ENCODE measurements at regions of chr11 and their contacts with region 1.

Region 1: GRCh38 chr11:117946842-117947526 is 17.8 kb upstream of the TMPRSS13 start:
- DNase-seq: peak; percentile 81 to 99
- H3K4me3 ChIP-seq: no peak overlapping the region
- H3K27ac ChIP-seq: no peak overlapping the region
- H3K4me1 ChIP-seq: 0 out of 7 replicates have a peak, but pooled peaks cover 0 to 2% (median 0%) of the 10 kb centered on the region in 4 experiments
- H3K27me3 ChIP-seq: no peaks in the 10 kb centered on the region
- CTCF ChIP-seq: peak; percentile 87 to 98 (median 98)
- EP300 ChIP-seq: 0 out of 3 replicates have a peak, but pooled peaks of 1 of the 2 experiments have one; percentile 9
- POLR2A ChIP-seq: no peak
- RAD21 ChIP-seq: peak; percentile 98 to 99

Region 2: GRCh38 chr11:117572129-117572528 is 374.9 kb before region 1 on chr11:
- CTCF ChIA-PET with region 1: no interaction called
- POLR2A ChIA-PET with region 1: no interaction called
- DNase-seq: no peak
- H3K4me3 ChIP-seq: no peak overlapping the region
- H3K27ac ChIP-seq: no peak overlapping the region
- H3K4me1 ChIP-seq: no peaks in the 10 kb centered on the region
- H3K27me3 ChIP-seq: no peaks in the 10 kb centered on the region
- CTCF ChIP-seq: no peak
- EP300 ChIP-seq: no peak
- POLR2A ChIP-seq: no peak
- RAD21 ChIP-seq: no peak

Region 3: DNA sequence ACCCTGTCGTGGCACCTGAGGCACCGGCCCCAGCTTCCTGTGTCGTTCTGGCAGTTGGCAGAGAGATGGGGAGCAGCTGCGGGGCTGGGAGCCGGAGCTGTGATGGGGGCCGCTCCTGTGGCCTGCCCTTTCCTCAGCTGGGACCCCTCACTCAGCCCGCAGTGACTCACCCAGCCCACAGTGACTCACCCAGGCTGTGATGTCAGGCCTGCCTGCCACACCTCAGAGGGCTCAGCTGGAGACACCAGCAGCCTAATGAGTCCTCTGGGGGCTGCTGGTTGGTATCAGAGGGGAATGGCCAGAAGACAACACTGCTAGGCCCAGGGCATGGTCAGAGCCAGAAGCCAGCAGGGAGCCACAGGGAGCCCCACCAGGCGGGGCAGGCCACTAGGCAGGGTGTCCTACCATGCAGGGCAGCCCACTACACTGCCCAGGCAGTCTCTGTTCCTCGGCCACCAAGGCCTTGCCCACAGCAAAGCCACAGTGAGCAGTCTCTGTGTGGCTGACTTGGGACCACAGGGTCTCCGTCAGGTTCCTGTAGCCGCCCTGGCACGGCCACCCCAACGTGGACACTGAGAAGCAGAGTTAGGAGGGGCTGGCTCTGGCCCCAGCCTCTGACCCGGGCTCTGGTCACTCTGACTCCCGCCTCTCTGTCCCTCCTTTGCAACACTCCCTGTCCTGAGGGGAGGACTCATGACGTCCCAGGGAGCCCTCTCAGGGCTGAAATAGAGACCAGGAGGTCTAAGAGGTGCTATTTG is 118.2 kb before region 1 on chr11:
- CTCF ChIA-PET with region 1: interaction called, 91 read pairs
- POLR2A ChIA-PET with region 1: no interaction called
- DNase-seq: peak in 1 of 2 experiments; percentile 43
- H3K4me3 ChIP-seq: no peak overlapping the region
- H3K27ac ChIP-seq: no peak overlapping the region; the same call in 1 of the 2 replicates
- H3K4me1 ChIP-seq: peaks cover 0 to 18% (median 10%) of the 10 kb centered on the region in 4 experiments; a peak in 6 of 7 replicates
- H3K27me3 ChIP-seq: no peaks in the 10 kb centered on the region; a peak in 1 of 7 replicates
- CTCF ChIP-seq: no peak
- EP300 ChIP-seq: no peak
- POLR2A ChIP-seq: no peak
- RAD21 ChIP-seq: no peak

Region 4: DNA sequence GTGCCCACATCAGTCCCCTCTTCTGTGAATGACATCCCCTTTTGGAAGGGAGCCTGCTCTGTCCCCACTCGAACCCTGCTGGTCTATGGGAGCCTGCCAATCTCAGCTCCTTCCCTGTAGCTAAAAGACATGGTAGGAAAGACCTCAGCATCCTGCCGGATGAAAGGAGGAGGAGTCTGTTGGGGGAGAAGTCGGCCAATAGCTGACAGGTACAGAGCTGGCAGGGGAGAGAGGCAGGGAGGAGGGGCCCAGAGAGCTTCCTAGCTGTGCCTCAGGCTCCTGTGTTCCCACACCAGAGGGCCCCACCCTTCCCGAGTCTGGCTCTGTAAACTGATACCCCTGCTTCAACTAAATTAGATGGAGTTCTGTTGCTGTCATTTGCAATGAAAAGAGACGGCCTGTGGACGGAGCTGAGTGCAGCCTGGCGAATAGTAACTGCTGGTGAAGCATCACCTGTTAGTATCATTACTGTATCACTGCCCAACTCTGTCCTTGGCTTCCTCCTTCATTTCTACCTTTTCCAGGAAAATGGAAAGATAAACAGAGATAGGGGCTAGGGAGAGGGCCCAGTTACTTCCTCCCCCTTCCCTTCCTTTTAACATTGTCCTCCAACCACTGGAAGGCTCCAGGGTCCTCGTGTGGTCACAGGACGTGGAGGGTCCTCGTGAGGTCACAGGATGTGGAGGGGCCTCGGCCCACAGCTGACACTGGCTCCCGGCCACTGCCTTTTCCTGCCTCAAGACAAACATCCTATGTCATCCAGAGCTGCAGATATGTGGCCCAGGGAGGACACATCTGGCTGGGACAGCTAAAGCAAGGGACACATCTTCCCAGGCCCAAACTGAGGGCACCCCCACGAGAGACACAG is 85.6 kb before region 1 on chr11:
- CTCF ChIA-PET with region 1: interaction called, 28 read pairs
- POLR2A ChIA-PET with region 1: no interaction called
- DNase-seq: peak; percentile 72 to 75
- H3K4me3 ChIP-seq: 0 out of 8 replicates have a peak overlapping the region, but pooled peaks of 1 of the 4 experiments have one; percentile 1
- H3K27ac ChIP-seq: no peak overlapping the region
- H3K4me1 ChIP-seq: peaks cover 6 to 17% (median 13%) of the 10 kb centered on the region in 4 experiments
- H3K27me3 ChIP-seq: no peaks in the 10 kb centered on the region
- CTCF ChIP-seq: no peak
- EP300 ChIP-seq: no peak
- POLR2A ChIP-seq: no peak
- RAD21 ChIP-seq: no peak; a peak in 1 of 4 replicates

Region 5: GRCh38 chr11:117907251-117907981 is 39.6 kb before region 1 on chr11:
- CTCF ChIA-PET with region 1: interaction called, 143 read pairs
- POLR2A ChIA-PET with region 1: no interaction called
- DNase-seq: peak; percentile 64 to 92
- H3K4me3 ChIP-seq: peak overlapping the region; percentile 2 to 34 (median 12); a peak in 4 of 8 replicates
- H3K27ac ChIP-seq: no peak overlapping the region
- H3K4me1 ChIP-seq: peaks cover 0 to 12% (median 3%) of the 10 kb centered on the region in 4 experiments; a peak in 5 of 7 replicates
- H3K27me3 ChIP-seq: no peaks in the 10 kb centered on the region
- CTCF ChIP-seq: no peak
- EP300 ChIP-seq: no peak
- POLR2A ChIP-seq: no peak
- RAD21 ChIP-seq: no peak

Region 6: DNA sequence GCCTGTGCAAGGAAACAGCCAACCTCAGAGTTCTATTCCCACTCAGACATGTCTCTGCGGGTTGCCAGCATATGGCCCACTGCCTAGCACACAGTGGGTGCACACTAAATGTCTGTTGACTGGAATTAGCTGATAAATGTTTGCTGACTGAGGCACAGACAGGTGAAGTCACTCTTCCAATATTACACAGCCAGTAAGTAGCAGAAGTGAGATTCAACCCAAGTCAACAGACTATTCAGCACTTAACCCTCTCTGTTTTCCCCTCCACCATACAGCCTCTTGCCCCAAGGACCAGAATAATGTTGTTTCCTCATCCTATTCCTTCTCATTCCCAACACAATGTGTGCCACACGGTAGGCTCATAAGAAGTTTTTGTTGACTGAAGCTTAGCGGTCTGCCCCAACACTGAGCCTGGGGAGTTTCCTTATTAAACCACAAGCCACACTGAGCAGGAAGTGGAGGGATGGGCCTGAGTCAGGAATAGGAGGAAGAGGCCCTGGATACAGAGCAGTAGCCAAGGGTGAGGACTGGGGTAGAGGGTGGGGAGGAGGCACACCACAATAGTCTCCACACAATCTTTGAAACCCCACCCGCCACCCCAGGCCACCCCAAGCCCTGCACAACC is 23.5 kb after region 1 on chr11:
- CTCF ChIA-PET with region 1: interaction called, 11 read pairs
- POLR2A ChIA-PET with region 1: no interaction called
- DNase-seq: no peak
- H3K4me3 ChIP-seq: no peak overlapping the region
- H3K27ac ChIP-seq: no peak overlapping the region
- H3K4me1 ChIP-seq: no peaks in the 10 kb centered on the region
- H3K27me3 ChIP-seq: peaks cover 0 to 2% (median 0%) of the 10 kb centered on the region in 4 experiments; a peak in 1 of 7 replicates
- CTCF ChIP-seq: no peak
- EP300 ChIP-seq: no peak
- POLR2A ChIP-seq: no peak
- RAD21 ChIP-seq: no peak

Region 7: GRCh38 chr11:118051611-118052461 is 104.9 kb after region 1 on chr11:
- CTCF ChIA-PET with region 1: interaction called, 134 read pairs
- POLR2A ChIA-PET with region 1: no interaction called
- DNase-seq: no peak
- H3K4me3 ChIP-seq: no peak overlapping the region
- H3K27ac ChIP-seq: no peak overlapping the region
- H3K4me1 ChIP-seq: no peaks in the 10 kb centered on the region; a peak in 1 of 7 replicates
- H3K27me3 ChIP-seq: no peaks in the 10 kb centered on the region
- CTCF ChIP-seq: no peak
- EP300 ChIP-seq: no peak
- POLR2A ChIP-seq: no peak
- RAD21 ChIP-seq: no peak

Measured in H1 (cell line).